ENCODE measurements at regions of chr20 and their contacts with region 1.

Region 1: GRCh38 chr20:35741892-35742740 is at the start of gene RBM39:
- DNase-seq: peak; percentile 100
- H3K4me3 Mint-ChIP-seq: peak within 1 kb of the TSS; percentile 91
- H3K27ac Mint-ChIP-seq: peak within 1 kb of the TSS; percentile 100
- H3K4me1 Mint-ChIP-seq: peaks cover 40% of the 10 kb centered on the region
- H3K27me3 Mint-ChIP-seq: no peaks in the 10 kb centered on the region
- total RNA-seq, gene RBM39: 374 to 396 TPM

Region 2: DNA sequence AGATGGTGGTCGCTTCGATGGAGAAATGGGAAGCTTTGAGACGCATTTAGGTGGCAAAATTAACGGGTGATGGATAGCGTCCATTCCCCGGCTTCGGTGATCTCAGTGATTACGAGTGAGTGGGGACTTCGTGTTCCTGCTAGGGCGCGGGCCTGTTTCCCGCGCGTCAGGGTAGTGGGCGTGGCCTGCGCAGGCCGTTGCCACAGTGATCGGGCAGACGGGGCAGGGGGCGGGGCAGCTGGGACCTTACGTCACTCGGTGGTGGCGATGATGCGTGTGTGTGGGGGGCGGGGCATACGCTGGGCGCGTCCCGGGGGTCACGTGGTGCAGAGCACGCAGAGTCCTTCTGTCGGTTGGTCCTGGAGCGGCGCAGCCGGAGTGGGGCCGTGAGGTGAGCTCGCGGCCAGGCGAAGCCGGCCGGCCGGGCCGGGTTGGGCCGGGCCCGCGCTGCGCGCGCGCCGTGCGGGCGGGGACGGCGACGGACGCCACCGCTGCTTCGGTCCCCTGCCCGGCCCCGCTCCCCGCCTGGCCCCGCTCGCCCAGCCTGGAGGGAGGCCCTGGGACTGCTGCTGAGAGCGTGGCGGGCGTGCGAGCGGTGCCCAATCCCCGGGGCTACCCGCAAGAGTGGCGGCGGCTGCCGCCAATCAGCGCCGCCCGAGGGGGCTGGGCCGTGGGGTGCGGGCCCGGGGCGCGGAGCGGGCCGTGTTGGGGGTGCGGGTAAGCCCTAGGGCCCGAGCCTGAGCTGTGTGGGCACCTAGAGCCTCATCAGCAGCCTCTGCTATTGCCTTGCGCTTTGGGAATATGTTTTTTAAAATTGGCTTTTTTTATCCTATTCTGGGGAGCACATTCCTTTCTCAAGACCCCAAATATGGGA is 29.8 kb after region 1 on chr20 and contains the start of gene PHF20:
- CTCF ChIA-PET with region 1: interaction called, 17 read pairs
- POLR2A ChIA-PET with region 1: interaction called, 32 read pairs
- DNase-seq: peak; percentile 99
- H3K4me3 Mint-ChIP-seq: peak within 1 kb of the TSS; percentile 82
- H3K27ac Mint-ChIP-seq: peak within 1 kb of the TSS; percentile 94
- H3K4me1 Mint-ChIP-seq: peaks cover 69% of the 10 kb centered on the region
- H3K27me3 Mint-ChIP-seq: no peaks in the 10 kb centered on the region
- total RNA-seq, gene PHF20: 47.8 to 49.0 TPM

Measured in activated CD4-positive, alpha-beta T cell treated with anti-CD3 and anti-CD28 coated beads, Interleukin-2, amount 10 ng/mL, durations not matched to agents 7 days and 5 days (primary cell).